Naive thymus-derived CD4-positive, alpha-beta T cell (primary cell): ENCODE measurements at regions of chr13 and their contacts with region 1.

Region 1: GRCh38 chr13:104204177-104204576 is 1138.0 kb upstream of the SLC10A2 start:
- DNase-seq: no peak
- ATAC-seq: no peak
- H3K4me3 ChIP-seq: no peak overlapping the region
- H3K4me3 Mint-ChIP-seq: no peak overlapping the region
- H3K27ac ChIP-seq: no peak overlapping the region
- H3K27ac Mint-ChIP-seq: no peak overlapping the region
- H3K4me1 ChIP-seq: no peaks in the 10 kb centered on the region
- H3K4me1 Mint-ChIP-seq: no peaks in the 10 kb centered on the region
- H3K27me3 ChIP-seq: no peaks in the 10 kb centered on the region
- H3K27me3 Mint-ChIP-seq: no peaks in the 10 kb centered on the region

Region 2: GRCh38 chr13:104143760-104144416 is 60.3 kb before region 1 on chr13:
- CTCF ChIA-PET with region 1: no interaction called
- POLR2A ChIA-PET with region 1: no interaction called
- intact Hi-C with region 1: loop called in 1 of 2 experiments (anchors 10 kb)
- DNase-seq: no peak
- ATAC-seq: no peak
- H3K4me3 ChIP-seq: no peak overlapping the region
- H3K4me3 Mint-ChIP-seq: no peak overlapping the region
- H3K27ac ChIP-seq: no peak overlapping the region
- H3K27ac Mint-ChIP-seq: no peak overlapping the region
- H3K4me1 ChIP-seq: no peaks in the 10 kb centered on the region
- H3K4me1 Mint-ChIP-seq: no peaks in the 10 kb centered on the region
- H3K27me3 ChIP-seq: no peaks in the 10 kb centered on the region
- H3K27me3 Mint-ChIP-seq: no peaks in the 10 kb centered on the region